ENCODE measurements at regions of chr1 and their contacts with region 1.

Region 1: GRCh38 chr1:11719313-11720032 is 16.5 kb upstream of the AGTRAP start:
- DNase-seq: peak; percentile 89
- ATAC-seq: peak; percentile 92
- H3K4me3 Mint-ChIP-seq: peak overlapping the region; percentile 72
- H3K27ac Mint-ChIP-seq: peak overlapping the region; percentile 96
- H3K4me1 Mint-ChIP-seq: peaks cover 16% of the 10 kb centered on the region
- H3K27me3 Mint-ChIP-seq: peaks cover 3% of the 10 kb centered on the region

Region 2: GRCh38 chr1:11654137-11654938 is 65.1 kb before region 1 on chr1 and contains the starts of genes FBXO2 and FBXO44:
- CTCF ChIA-PET with region 1: interaction called, 214 read pairs
- DNase-seq: peak; percentile 61
- ATAC-seq: peak; percentile 79
- H3K4me3 Mint-ChIP-seq: peak within 1 kb of the TSS; percentile 63
- H3K27ac Mint-ChIP-seq: no peak within 1 kb of the TSS
- H3K4me1 Mint-ChIP-seq: peaks cover 27% of the 10 kb centered on the region
- H3K27me3 Mint-ChIP-seq: peaks cover 3% of the 10 kb centered on the region
- total RNA-seq, gene FBXO2: 1.8 to 4.6 TPM
- total RNA-seq, gene FBXO44: 28.6 to 39.9 TPM

Region 3: GRCh38 chr1:11693024-11693590 is 26.4 kb before region 1 on chr1:
- CTCF ChIA-PET with region 1: interaction called, 33 read pairs
- DNase-seq: peak; percentile 85
- ATAC-seq: peak; percentile 82
- H3K4me3 Mint-ChIP-seq: peak overlapping the region; percentile 30
- H3K27ac Mint-ChIP-seq: peak overlapping the region; percentile 59
- H3K4me1 Mint-ChIP-seq: peaks cover 30% of the 10 kb centered on the region
- H3K27me3 Mint-ChIP-seq: peaks cover 49% of the 10 kb centered on the region

Region 4: GRCh38 chr1:11729498-11730428 is 10.3 kb after region 1 on chr1:
- CTCF ChIA-PET with region 1: interaction called, 31 read pairs
- DNase-seq: peak; percentile 47
- ATAC-seq: peak; percentile 62
- H3K4me3 Mint-ChIP-seq: peak overlapping the region; percentile 54
- H3K27ac Mint-ChIP-seq: peak overlapping the region; percentile 79
- H3K4me1 Mint-ChIP-seq: peaks cover 46% of the 10 kb centered on the region
- H3K27me3 Mint-ChIP-seq: no peaks in the 10 kb centered on the region

Region 5: GRCh38 chr1:11749203-11749689 is 29.8 kb after region 1 on chr1:
- CTCF ChIA-PET with region 1: interaction called, 10 read pairs
- DNase-seq: peak; percentile 71
- ATAC-seq: peak; percentile 86
- H3K4me3 Mint-ChIP-seq: no peak overlapping the region
- H3K27ac Mint-ChIP-seq: peak overlapping the region; percentile 74
- H3K4me1 Mint-ChIP-seq: peaks cover 33% of the 10 kb centered on the region
- H3K27me3 Mint-ChIP-seq: no peaks in the 10 kb centered on the region